HepG2 (cell line): ENCODE measurements at regions of chr20 and their contacts with region 1.

Region 1: DNA sequence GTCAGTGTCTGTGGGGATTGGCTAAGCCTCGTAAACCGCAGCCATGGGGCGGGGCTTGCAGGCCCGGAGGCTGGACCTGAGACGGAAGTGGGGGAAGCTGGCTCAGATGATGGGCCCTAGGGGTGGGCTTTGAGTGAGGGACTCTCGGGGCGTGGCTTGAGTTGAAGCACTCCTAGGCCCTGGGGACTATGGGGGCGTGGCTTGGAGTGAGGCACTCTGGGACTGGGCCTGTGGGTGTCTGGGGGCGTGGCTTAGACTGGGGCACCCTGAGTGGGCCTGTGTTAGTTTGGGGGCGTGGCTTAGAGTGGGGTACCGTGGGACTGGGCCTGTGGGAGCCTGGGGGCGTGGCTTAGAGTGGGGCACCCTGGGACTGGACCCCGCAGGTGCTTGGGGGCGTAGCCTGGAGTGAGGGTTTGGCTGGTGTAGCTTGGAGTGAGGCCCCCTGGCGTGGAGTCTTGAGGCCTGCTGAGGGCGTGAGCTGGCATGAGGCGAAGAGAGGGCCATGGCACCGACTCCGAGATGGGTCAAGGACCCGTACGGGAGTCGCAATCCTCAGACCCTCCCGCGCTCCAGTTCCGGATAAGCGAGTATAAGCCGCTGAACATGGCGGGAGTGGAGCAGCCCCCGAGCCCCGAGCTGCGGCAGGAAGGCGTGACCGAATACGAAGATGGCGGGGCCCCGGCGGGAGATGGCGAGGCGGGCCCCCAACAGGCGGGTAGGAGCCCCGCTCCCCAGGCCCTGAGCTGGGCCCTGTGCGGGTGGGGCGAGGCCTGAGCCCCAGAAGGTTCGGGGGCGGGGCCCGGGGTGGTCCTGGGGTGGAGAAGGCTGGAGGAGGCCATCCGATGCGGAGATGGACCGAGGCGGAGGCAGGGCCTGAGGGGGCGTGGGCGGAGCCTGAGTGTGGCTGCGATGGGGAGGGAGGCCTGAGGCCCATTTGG is 6.8 kb downstream of the L3MBTL1 start:
- DNase-seq: peak; percentile 100
- ATAC-seq: peak; percentile 87
- H3K4me3 ChIP-seq: peak overlapping the region; percentile 62 to 84 (median 81)
- H3K27ac ChIP-seq: peak overlapping the region; percentile 16
- H3K4me1 ChIP-seq: peaks cover 26% of the 10 kb centered on the region
- H3K27me3 ChIP-seq: no peaks in the 10 kb centered on the region
- CTCF ChIP-seq: peak; percentile 80
- EP300 ChIP-seq: no peak
- POLR2A ChIP-seq: peak; percentile 65 to 89
- RAD21 ChIP-seq: peak; percentile 69

Region 2: DNA sequence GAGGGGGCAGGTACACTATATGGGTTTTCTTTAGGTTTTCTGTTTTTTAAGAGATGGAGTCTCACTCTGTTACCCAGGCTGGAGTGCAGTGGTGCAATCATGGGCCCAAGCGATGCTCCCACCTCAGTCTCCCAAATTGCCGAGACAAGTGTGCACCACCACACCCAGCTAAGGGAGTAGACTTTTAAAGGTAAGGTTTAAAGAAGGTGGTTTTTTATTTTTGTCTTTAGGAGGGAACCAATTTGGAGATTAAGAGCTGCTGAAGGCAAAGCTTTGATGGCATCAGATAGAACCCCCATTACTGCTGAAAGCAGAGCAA is 48.7 kb before region 1 on chr20:
- CTCF ChIA-PET with region 1: no interaction called
- POLR2A ChIA-PET with region 1: interaction called, 23 read pairs
- in situ Hi-C with region 1: no loop called
- intact Hi-C with region 1: no loop called
- DNase-seq: no peak
- ATAC-seq: peak; percentile 8
- H3K4me3 ChIP-seq: no peak overlapping the region
- H3K27ac ChIP-seq: no peak overlapping the region
- H3K4me1 ChIP-seq: peaks cover 28% of the 10 kb centered on the region
- H3K27me3 ChIP-seq: no peaks in the 10 kb centered on the region
- CTCF ChIP-seq: no peak
- EP300 ChIP-seq: no peak
- POLR2A ChIP-seq: no peak; a peak in 1 of 4 replicates
- RAD21 ChIP-seq: no peak

Region 3: GRCh38 chr20:43530321-43531090 is 16.2 kb after region 1 on chr20:
- CTCF ChIA-PET with region 1: no interaction called
- POLR2A ChIA-PET with region 1: interaction called, 31 read pairs
- in situ Hi-C with region 1: no loop called
- intact Hi-C with region 1: no loop called
- DNase-seq: peak; percentile 91
- ATAC-seq: peak; percentile 89
- H3K4me3 ChIP-seq: no peak overlapping the region
- H3K27ac ChIP-seq: peak overlapping the region; percentile 65
- H3K4me1 ChIP-seq: peaks cover 39% of the 10 kb centered on the region
- H3K27me3 ChIP-seq: no peaks in the 10 kb centered on the region
- CTCF ChIP-seq: peak; percentile 44
- EP300 ChIP-seq: peak in 1 of 2 experiments; percentile 43; a peak in 1 of 4 replicates
- POLR2A ChIP-seq: no peak
- RAD21 ChIP-seq: peak; percentile 58

Region 4: GRCh38 chr20:45036044-45036755 is 1521.9 kb after region 1 on chr20:
- CTCF ChIA-PET with region 1: no interaction called
- POLR2A ChIA-PET with region 1: no interaction called
- in situ Hi-C with region 1: no loop called
- intact Hi-C with region 1: no loop called
- DNase-seq: peak; percentile 23
- ATAC-seq: no peak
- H3K4me3 ChIP-seq: no peak overlapping the region
- H3K27ac ChIP-seq: no peak overlapping the region
- H3K4me1 ChIP-seq: no peaks in the 10 kb centered on the region
- H3K27me3 ChIP-seq: no peaks in the 10 kb centered on the region
- CTCF ChIP-seq: no peak
- EP300 ChIP-seq: no peak
- POLR2A ChIP-seq: no peak
- RAD21 ChIP-seq: no peak